Activated B cell treated with CpG ODN at 0.5 μM for 24 hours (primary cell): ENCODE measurements at regions of chr1 and their contacts with region 1.

Region 1: GRCh38 chr1:210311726-210312493 is 16.8 kb upstream of the HHAT start:
- DNase-seq: no peak
- ATAC-seq: no peak
- H3K4me3 Mint-ChIP-seq: peak overlapping the region; percentile 83
- H3K27ac Mint-ChIP-seq: no peak overlapping the region
- H3K4me1 Mint-ChIP-seq: peaks cover 4% of the 10 kb centered on the region
- H3K27me3 Mint-ChIP-seq: peaks cover 18% of the 10 kb centered on the region
- CTCF ChIP-seq: no peak

Region 2: DNA sequence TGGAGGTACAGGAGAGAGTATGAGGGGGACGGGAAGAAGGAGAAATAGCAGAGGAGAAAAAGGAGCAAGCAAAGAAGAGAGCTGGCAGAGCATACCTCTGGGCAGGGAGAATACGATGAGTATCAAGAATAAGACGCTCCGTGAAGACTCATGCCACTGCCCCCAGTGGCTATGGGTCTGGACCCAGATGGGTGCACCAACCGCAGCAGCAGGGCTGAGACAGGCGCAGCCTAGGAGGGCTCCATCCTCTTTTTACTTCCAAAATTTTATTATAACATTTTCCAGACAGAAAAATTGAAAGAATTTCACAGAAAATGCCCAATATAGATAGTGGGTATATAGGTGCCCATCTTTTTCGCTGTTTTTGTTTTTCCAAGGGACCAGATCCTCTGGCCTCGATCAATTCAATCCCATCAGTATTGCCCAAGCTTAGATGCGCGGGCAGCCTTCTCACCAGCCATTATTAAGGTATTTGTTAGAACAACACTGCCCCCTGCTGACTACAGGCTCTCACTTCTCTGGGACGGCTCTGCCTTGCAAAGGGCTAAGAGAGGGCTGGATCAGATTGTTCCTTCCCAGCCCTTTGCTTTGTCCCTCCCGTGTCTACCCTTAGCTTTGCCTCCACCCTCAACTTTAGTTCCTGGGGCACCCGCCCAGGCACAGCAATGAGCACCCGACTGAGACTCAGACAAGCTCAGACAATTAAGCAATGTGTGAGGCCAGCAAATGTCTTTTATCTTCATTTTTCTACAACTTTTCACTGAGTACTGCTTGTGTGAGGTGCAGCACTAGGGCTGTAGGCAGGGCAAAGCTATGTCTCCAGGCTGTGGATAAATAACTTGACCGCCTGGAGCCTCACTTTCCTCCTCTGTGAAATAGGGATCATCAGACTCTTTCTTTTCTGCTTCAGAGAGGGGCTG is 745.9 kb before region 1 on chr1:
- CTCF ChIA-PET with region 1: no interaction called
- POLR2A ChIA-PET with region 1: no interaction called
- intact Hi-C with region 1: loop called (anchors 10 kb)
- DNase-seq: peak; percentile 23
- ATAC-seq: peak; percentile 77
- H3K4me3 Mint-ChIP-seq: no peak overlapping the region
- H3K27ac Mint-ChIP-seq: no peak overlapping the region
- H3K4me1 Mint-ChIP-seq: peaks cover 6% of the 10 kb centered on the region
- H3K27me3 Mint-ChIP-seq: peaks cover 52% of the 10 kb centered on the region
- CTCF ChIP-seq: no peak

Region 3: DNA sequence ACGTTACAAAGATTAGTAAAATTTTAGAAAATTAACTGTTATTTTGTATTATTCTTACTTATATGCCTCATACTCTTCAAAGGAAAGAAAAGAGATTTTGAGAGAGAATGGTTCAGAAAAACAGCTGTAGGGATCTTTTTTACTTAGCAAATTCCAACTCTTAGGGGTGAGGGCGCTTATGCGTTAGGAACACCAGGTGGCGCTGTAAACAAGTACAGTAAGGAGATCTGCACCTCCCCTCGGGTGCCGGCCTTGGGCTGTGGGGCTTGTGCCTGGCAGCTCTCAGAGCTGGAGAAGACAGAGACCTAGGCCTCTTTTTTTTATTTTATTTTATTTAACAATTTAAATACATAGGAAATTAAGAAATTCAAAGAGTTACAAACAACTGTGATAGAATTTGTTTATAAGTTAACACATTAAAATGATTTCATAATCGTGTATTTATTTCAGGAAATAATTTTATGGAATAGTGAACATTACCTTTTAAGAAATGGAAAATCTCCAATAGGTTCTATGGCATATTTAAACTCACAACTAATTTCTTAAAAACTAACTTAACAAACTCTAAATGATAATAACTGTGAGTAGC is 451.5 kb before region 1 on chr1:
- CTCF ChIA-PET with region 1: interaction called, 6 read pairs
- POLR2A ChIA-PET with region 1: no interaction called
- intact Hi-C with region 1: loop called (anchors 1 kb)
- DNase-seq: peak; percentile 26
- ATAC-seq: peak; percentile 86
- H3K4me3 Mint-ChIP-seq: no peak overlapping the region
- H3K27ac Mint-ChIP-seq: no peak overlapping the region
- H3K4me1 Mint-ChIP-seq: no peaks in the 10 kb centered on the region
- H3K27me3 Mint-ChIP-seq: peaks cover 5% of the 10 kb centered on the region
- CTCF ChIP-seq: peak; percentile 93

Region 4: GRCh38 chr1:210328746-210329503 is 17.0 kb after region 1 on chr1 and contains the start of gene HHAT:
- CTCF ChIA-PET with region 1: interaction called, 4 read pairs
- POLR2A ChIA-PET with region 1: no interaction called
- intact Hi-C with region 1: loop called (anchors 1 kb)
- DNase-seq: peak; percentile 73
- ATAC-seq: peak; percentile 80
- H3K4me3 Mint-ChIP-seq: peak within 1 kb of the TSS; percentile 97
- H3K27ac Mint-ChIP-seq: peak within 1 kb of the TSS; percentile 96
- H3K4me1 Mint-ChIP-seq: peaks cover 43% of the 10 kb centered on the region
- H3K27me3 Mint-ChIP-seq: peaks cover 6% of the 10 kb centered on the region
- CTCF ChIP-seq: no peak
- total RNA-seq, gene HHAT: 6.1 and 8.5 TPM in 2 replicates

Region 5: GRCh38 chr1:210360852-210361477 is 49.1 kb after region 1 on chr1:
- CTCF ChIA-PET with region 1: no interaction called
- POLR2A ChIA-PET with region 1: no interaction called
- intact Hi-C with region 1: loop called (anchors 1 kb)
- DNase-seq: no peak
- ATAC-seq: peak; percentile 62
- H3K4me3 Mint-ChIP-seq: no peak overlapping the region
- H3K27ac Mint-ChIP-seq: no peak overlapping the region
- H3K4me1 Mint-ChIP-seq: no peaks in the 10 kb centered on the region
- H3K27me3 Mint-ChIP-seq: no peaks in the 10 kb centered on the region
- CTCF ChIP-seq: no peak